PC-3 (cell line): ENCODE measurements at regions of chr4 and their contacts with region 1.

Region 1: DNA sequence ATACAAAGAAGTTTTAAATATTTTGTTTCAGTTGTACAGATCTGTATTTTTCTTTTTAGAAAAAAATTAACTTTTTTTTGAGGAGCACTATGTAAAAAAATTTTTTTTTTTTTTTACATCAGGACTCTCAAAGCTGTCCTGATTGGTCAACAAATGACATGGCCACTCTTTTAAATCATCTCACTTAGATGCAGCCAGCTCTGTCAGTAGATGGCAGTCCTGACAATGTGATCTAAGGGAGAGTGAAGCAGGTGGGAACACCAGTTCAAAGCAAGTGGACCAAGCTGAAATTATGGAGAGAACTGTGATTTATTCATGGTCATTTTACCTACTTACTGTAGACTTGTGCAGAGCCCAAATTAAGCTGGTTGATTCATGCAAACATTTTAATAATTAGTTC is 174.6 kb upstream of the GPRIN3 start:
- DNase-seq: peak; percentile 48
- ATAC-seq: peak; percentile 84
- H3K4me3 ChIP-seq: no peak overlapping the region
- H3K27ac ChIP-seq: no peak overlapping the region
- H3K4me1 ChIP-seq: no peaks in the 10 kb centered on the region
- H3K27me3 ChIP-seq: no peaks in the 10 kb centered on the region
- CTCF ChIP-seq: peak; percentile 55

Region 2: DNA sequence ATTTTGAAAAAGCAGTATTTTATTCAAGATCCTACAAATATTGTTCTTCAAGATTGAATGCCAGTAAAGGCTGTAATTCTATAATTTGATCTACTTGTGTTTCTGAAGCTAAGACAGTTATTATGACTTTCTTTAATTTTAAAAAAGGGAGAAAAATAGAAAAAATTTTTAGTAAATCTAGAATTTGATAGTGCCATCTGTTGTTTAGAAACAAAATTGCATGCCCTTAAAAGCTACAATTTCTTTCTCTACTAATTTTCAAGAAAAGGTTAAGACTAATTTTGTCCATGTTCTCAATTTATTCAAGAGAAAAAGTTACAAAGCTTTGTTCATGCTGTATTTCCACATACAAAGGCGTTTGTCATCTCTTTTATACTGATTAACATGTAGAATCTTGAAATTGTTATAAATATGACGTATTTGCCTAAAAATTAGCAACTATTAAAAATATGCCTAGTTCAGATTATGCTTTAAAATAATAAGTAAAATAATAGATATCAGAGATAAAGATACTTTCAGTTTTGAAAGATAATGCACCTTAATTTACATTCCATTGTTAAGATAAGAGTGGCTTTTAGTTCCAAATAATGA is 386.8 kb after region 1 on chr4:
- CTCF ChIA-PET with region 1: interaction called, 5 read pairs
- POLR2A ChIA-PET with region 1: no interaction called
- intact Hi-C with region 1: loop called (anchors 10 kb)
- DNase-seq: peak; percentile 32
- ATAC-seq: no peak
- H3K4me3 ChIP-seq: no peak overlapping the region
- H3K27ac ChIP-seq: no peak overlapping the region
- H3K4me1 ChIP-seq: no peaks in the 10 kb centered on the region
- H3K27me3 ChIP-seq: peaks cover 34% of the 10 kb centered on the region
- CTCF ChIP-seq: peak; percentile 71

Region 3: DNA sequence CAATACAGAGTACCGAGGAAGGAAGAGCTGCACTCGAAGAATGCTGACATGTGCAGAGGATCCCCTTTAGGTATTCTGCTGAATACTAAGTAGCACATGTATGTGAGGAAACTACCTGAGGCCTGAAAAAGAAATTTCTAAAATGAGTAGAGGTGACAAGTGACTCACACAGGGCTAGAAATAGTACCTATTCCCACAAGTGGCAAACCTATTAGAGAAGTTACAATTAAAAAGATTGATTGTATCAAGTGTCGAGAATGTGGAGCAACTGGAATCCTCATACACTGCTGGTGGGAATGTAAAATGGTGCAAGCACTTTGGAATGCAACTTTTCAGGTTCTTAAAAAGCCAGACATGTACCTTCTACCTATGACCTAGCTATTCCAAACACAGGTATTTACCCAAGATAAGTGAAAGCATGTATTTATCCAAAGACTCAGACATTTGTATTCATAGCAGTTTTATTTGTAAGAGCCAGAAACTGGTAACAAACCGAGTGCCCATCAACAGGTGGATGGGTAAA is 692.4 kb after region 1 on chr4:
- CTCF ChIA-PET with region 1: no interaction called
- POLR2A ChIA-PET with region 1: no interaction called
- intact Hi-C with region 1: no loop called
- DNase-seq: peak; percentile 90
- ATAC-seq: peak; percentile 88
- H3K4me3 ChIP-seq: peak overlapping the region; percentile 45; the same call in 1 of the 2 replicates
- H3K27ac ChIP-seq: peak overlapping the region; percentile 79
- H3K4me1 ChIP-seq: peaks cover 37% of the 10 kb centered on the region
- H3K27me3 ChIP-seq: no peaks in the 10 kb centered on the region
- CTCF ChIP-seq: no peak